RWPE1 (cell line): ENCODE measurements at regions of chr3 and their contacts with region 1.

Region 1: DNA sequence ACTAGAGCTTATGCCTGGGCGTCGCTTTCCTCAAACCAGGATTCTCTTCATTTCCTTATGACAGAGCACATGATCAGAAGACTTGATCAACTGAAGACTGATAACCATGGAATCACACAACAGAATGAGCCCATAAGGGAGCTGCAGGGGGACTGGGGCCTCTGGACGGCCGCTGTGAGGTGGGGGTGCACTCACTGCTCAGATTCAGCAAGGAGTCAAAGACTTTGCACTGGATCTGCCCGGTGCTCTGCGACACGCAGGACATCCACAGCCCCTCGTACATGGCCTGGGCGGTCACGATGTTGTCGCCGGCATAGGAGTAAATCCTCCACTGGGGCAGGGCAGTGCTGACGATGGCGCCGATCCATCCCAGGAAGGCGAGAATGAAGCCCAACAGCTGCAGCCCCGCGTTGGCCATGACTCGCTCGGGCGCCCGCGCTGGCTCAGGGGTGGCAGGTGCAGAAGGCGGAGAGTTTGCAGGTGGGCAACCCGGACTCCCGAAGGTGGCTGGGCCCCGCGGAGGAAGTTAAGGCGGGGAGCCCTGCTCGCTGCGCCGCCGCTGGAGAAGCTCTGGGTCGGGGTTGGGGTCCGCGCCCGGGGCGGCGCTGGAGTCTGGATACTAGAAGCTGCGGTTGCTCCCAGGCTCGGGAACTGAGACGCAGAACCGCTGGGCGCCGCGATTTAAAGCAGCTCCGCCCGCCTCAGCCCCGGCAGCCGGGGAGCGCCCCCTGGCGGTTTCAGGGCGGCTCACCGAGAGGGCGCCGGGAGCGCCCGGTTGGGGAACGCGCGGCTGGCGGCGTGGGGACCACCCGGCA is at the start of gene CLDN1:
- DNase-seq: peak; percentile 72
- H3K27ac ChIP-seq: peak within 1 kb of the TSS; percentile 16; the same call in 1 of the 2 replicates
- CTCF ChIP-seq: peak; percentile 96

Region 2: DNA sequence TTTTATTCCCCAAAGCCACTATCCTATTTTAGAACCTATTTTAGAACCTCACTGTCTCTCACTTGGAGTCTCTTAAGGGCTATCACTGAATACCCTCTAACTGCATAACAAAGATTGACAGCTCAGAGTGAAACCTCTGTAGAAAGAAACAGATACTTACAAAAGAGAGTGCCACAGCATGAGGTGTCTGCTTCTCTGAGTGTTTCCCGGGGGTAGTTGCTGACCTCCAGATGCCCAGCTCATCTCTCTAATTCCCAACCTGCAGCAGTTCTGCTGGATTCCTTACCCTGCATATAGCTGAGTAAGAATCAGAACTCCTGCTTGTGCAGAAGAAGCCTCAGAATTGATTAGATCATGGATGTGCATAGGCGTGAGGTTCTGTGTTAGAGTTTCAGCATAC is 235.8 kb before region 1 on chr3:
- CTCF ChIA-PET with region 1: no interaction called
- POLR2A ChIA-PET with region 1: no interaction called
- DNase-seq: no peak
- H3K27ac ChIP-seq: no peak overlapping the region
- CTCF ChIP-seq: no peak

Region 3: DNA sequence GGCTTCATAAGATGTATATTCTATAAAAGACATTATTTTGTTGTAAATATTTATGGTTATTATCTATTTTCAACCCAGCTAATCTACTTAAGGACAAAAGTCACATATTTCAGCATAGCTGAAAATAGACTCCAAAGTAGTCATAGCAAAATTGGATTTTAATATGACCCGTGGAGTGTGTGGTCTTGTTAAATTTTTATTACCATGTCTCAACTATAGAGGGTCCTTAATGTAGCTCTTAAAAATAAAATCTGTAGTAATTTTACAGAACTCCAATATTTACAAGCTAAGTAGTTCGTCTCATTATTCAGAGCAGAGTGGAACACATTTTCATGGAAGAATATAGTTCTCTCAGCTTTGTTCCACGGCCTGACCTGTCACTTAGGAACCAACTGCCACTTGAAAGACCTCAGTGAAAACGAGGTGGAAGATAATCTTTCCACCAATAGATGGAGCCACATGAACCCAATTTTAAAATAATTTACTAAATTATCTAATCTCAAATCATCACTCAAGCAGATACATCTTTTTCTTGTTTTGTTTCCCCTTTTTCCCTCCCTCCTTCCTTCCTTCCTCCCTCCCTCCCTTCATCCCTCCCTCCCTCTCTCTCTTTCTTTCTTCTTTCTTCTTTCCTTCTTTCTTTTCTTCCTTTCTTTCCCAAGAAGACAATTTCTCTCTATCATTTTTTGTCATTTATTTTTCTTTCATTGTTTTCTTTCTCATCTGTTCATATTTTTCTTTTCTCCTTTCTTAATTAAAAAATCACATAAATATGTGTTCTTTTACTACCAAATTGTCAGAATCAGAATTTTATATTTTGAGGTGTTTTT is 96.9 kb before region 1 on chr3:
- CTCF ChIA-PET with region 1: interaction called, 18 read pairs
- POLR2A ChIA-PET with region 1: no interaction called
- DNase-seq: peak; percentile 31
- H3K27ac ChIP-seq: no peak overlapping the region
- CTCF ChIP-seq: peak; percentile 58

Region 4: DNA sequence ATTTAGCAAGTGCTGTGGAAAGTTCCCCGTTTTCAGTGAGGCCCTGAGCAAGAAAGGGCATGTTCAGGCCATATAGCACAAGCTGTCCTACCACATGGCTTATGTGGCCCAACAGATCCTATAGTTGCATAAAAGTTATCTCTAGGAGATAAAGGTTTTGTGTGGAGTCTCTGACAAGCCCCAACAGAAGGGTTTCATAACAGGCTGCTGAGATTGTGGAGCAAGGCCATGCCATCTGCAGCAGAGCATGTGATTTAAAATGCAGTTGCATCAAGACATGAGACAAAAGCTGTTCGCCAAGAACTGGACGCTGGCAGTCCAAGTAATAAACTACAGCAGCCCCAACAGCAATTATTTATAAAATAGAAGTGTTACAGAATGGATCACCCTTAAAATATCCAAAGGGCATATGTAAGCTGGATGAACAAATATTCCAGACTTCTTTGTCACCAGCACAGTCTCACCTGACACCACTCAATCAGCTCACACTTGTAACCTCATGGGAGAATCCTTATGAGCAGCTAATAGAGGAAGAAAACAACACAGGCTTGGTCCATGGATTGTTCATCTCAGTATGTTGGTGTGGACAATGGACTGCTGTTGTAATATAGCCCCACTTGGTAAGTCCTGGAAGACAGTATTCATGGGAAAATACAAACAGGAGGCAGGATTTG is 14.7 kb after region 1 on chr3:
- CTCF ChIA-PET with region 1: interaction called, 10 read pairs
- POLR2A ChIA-PET with region 1: no interaction called
- DNase-seq: no peak
- H3K27ac ChIP-seq: 0 out of 2 replicates have a peak overlapping the region, but pooled peaks have one; percentile 12
- CTCF ChIP-seq: no peak

Region 5: GRCh38 chr3:190378240-190378891 is 56.4 kb after region 1 on chr3:
- CTCF ChIA-PET with region 1: interaction called, 11 read pairs
- POLR2A ChIA-PET with region 1: no interaction called
- DNase-seq: peak; percentile 59
- H3K27ac ChIP-seq: no peak overlapping the region
- CTCF ChIP-seq: no peak